B cell (primary cell): ENCODE measurements at regions of chr20 and their contacts with region 1.

Region 1: GRCh38 chr20:36605399-36606157 is at the start of gene RAB5IF:
- DNase-seq: peak; percentile 100
- ATAC-seq: peak; percentile 83
- H3K4me3 ChIP-seq: peak within 1 kb of the TSS; percentile 72 to 97 (median 90)
- H3K4me3 Mint-ChIP-seq: peak within 1 kb of the TSS; percentile 97
- H3K27ac ChIP-seq: peak within 1 kb of the TSS; percentile 91 to 97
- H3K27ac Mint-ChIP-seq: peak within 1 kb of the TSS; percentile 95
- H3K4me1 ChIP-seq: peaks cover 23 to 39% of the 10 kb centered on the region in 2 donors
- H3K4me1 Mint-ChIP-seq: peaks cover 46% of the 10 kb centered on the region
- H3K27me3 ChIP-seq: no peaks in the 10 kb centered on the region
- H3K27me3 Mint-ChIP-seq: no peaks in the 10 kb centered on the region
- CTCF ChIP-seq: peak; percentile 90
- total RNA-seq, gene RAB5IF: 40.1 and 41.4 TPM in 2 replicates

Region 2: DNA sequence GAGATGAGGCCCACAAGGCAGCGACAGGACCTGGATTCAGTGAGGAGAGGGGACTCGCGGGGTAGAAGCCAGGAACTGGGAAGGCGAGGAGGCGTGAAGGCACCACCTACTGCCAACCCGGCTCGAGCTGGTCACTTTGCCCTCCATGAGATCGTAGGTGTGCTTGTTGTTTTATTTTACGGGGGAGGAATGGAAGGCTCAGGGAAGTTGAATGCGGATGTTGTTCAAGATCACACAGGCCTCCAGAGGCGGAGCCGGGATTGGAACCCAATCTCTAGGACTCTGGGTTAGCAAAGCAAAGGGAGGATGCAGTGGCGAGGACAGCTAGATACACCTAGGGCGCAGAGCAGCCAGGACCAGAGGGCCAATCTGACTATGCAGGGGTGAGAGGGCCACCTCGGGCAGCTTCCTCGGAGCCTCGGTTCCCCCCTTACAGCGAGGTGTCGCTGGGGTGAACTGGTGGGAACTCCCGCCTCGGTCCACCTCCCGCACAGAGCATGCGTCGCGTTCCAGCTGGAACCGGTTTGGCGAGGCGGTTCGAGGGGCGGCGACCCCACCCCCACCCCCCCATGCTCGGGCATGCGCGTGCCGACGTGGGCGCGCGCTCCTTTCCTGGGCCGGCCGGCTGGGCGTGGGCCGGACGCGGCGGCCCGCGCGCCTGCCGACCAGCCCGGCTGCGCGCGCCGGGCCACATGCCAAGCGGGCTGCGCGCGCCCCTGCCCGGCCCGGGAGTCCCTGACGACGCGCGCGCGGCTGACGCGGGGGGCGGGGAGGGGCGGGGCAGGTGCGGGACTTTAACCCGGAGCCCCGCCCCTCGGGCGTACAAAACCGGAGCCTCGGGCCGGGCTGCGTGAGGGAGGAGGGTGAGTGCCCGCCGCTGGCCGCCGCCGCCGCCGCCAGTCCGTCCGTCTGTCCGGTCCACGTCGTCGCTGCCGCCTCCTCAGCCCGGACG is 144.7 kb before region 1 on chr20:
- CTCF ChIA-PET with region 1: interaction called, 6 read pairs
- POLR2A ChIA-PET with region 1: interaction called, 8 read pairs
- intact Hi-C with region 1: loop called (anchors 2 kb)
- DNase-seq: peak; percentile 97
- ATAC-seq: peak; percentile 80
- H3K4me3 ChIP-seq: peak overlapping the region; percentile 40 to 79 (median 47)
- H3K4me3 Mint-ChIP-seq: peak overlapping the region; percentile 81
- H3K27ac ChIP-seq: peak overlapping the region; percentile 96 to 98
- H3K27ac Mint-ChIP-seq: peak overlapping the region; percentile 91
- H3K4me1 ChIP-seq: peaks cover 42 to 49% of the 10 kb centered on the region in 2 donors
- H3K4me1 Mint-ChIP-seq: peaks cover 46% of the 10 kb centered on the region
- H3K27me3 ChIP-seq: no peaks in the 10 kb centered on the region
- H3K27me3 Mint-ChIP-seq: no peaks in the 10 kb centered on the region
- CTCF ChIP-seq: no peak

Region 3: DNA sequence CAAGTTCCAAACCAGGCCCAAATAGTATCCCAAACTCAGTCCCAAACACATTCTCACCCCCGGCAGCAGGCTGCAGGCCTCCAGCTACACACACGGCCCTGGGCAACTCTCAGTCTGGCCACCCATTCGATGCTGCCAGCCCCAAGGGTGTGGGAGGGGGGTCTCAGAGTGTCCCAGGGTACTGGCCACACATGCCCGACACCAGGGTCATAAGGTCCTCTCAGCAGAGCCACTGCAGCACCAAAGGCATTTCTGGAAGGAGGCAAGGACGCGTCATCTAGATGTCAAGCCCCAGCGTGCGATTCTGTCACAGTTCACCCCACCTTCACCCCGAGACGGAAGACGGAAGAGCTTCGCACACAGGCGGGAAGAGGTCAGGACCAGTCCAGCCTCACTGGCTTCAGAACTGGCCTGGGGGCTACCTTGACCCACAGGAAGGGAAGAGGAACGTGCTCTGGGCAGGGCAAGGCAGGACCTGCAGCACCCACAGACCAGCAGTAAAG is 54.7 kb before region 1 on chr20:
- CTCF ChIA-PET with region 1: interaction called, 6 read pairs
- POLR2A ChIA-PET with region 1: no interaction called
- intact Hi-C with region 1: loop called (anchors 1 kb)
- DNase-seq: no peak
- ATAC-seq: no peak
- H3K4me3 ChIP-seq: no peak overlapping the region
- H3K4me3 Mint-ChIP-seq: no peak overlapping the region
- H3K27ac ChIP-seq: no peak overlapping the region
- H3K27ac Mint-ChIP-seq: no peak overlapping the region
- H3K4me1 ChIP-seq: peaks cover 0 to under 1% of the 10 kb centered on the region in 2 donors
- H3K4me1 Mint-ChIP-seq: peaks cover 4% of the 10 kb centered on the region
- H3K27me3 ChIP-seq: no peaks in the 10 kb centered on the region
- H3K27me3 Mint-ChIP-seq: no peaks in the 10 kb centered on the region
- CTCF ChIP-seq: no peak

Region 4: GRCh38 chr20:36573103-36573794 is 32.3 kb before region 1 on chr20 and contains the start of gene TGIF2:
- CTCF ChIA-PET with region 1: interaction called, 63 read pairs
- POLR2A ChIA-PET with region 1: interaction called, 75 read pairs
- intact Hi-C with region 1: loop called (anchors 1 kb)
- DNase-seq: peak; percentile 94
- ATAC-seq: peak; percentile 80
- H3K4me3 ChIP-seq: peak within 1 kb of the TSS; percentile 22 to 95 (median 88)
- H3K4me3 Mint-ChIP-seq: peak within 1 kb of the TSS; percentile 92
- H3K27ac ChIP-seq: peak within 1 kb of the TSS; percentile 97 to 100
- H3K27ac Mint-ChIP-seq: peak within 1 kb of the TSS; percentile 98
- H3K4me1 ChIP-seq: peaks cover 23 to 34% of the 10 kb centered on the region in 2 donors
- H3K4me1 Mint-ChIP-seq: peaks cover 34% of the 10 kb centered on the region
- H3K27me3 ChIP-seq: no peaks in the 10 kb centered on the region
- H3K27me3 Mint-ChIP-seq: no peaks in the 10 kb centered on the region
- CTCF ChIP-seq: no peak
- total RNA-seq, gene TGIF2: 45.6 and 46.1 TPM in 2 replicates

Region 5: DNA sequence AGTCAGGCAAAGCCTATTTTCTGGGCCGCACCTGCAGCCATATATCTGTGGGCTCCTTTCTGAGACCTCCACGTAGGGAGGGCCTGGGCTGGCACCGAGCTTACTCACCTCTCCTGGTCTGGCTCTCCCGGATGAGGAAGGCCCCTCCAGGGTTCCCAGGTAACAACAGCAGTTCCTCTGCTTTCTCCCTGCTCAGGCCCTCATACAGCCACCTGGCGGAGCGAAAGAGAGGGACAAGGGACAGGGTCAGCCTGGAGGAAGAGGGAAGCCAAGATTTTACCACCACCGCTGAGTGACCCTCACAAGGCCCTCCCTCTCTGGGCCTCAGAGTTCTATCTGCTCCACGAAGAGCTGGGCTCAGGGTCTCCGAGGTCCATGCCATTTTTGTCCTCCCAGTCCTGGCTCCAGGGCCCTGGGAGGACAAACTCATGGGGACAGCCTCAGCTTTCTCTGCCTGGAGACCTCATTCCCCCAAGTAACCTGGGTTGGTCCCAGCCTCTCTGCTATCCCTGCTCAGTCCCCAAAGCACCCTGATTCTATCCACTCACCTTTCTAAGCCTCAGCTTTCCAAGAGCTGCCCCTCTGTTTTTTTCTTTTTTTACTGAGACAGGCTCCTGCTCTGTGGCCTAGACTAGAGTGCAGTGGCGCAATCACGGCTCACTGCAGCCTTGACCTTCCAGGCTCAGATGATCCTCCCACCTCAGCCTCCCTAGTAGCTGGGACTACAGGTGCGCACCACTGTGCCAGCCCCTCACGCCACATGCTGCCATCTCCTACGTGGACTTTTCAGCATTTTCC is 27.1 kb after region 1 on chr20:
- CTCF ChIA-PET with region 1: no interaction called
- POLR2A ChIA-PET with region 1: no interaction called
- intact Hi-C with region 1: no loop called
- DNase-seq: no peak
- ATAC-seq: no peak
- H3K4me3 ChIP-seq: no peak overlapping the region
- H3K4me3 Mint-ChIP-seq: no peak overlapping the region
- H3K27ac ChIP-seq: no peak overlapping the region
- H3K27ac Mint-ChIP-seq: no peak overlapping the region
- H3K4me1 ChIP-seq: peaks cover 9 to 11% of the 10 kb centered on the region in 2 donors
- H3K4me1 Mint-ChIP-seq: peaks cover 13% of the 10 kb centered on the region
- H3K27me3 ChIP-seq: no peaks in the 10 kb centered on the region
- H3K27me3 Mint-ChIP-seq: no peaks in the 10 kb centered on the region
- CTCF ChIP-seq: no peak

Region 6: DNA sequence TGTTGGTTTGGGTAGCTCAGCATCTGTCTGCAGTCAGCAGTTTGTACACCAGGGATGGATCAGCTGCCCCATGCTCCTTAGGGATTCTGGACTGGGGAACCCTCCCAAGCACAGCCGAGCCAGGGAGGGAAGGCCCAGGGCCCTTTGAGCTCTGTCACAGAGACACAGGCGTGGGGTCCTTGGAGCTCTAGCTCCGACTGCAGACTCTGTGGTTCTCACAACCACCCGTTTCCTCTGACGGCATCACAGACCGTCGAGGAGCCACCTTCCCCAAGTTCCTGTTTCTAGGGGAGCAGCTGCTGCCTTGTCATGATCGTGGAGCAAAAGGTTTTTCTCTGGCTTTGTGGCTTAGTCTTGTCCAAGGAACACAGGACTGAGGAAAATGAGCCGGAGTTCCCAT is 40.4 kb after region 1 on chr20 and contains the start of gene SLA2:
- CTCF ChIA-PET with region 1: interaction called, 4 read pairs
- POLR2A ChIA-PET with region 1: interaction called, 11 read pairs
- intact Hi-C with region 1: no loop called
- DNase-seq: peak; percentile 60
- ATAC-seq: peak; percentile 86
- H3K4me3 ChIP-seq: no peak within 1 kb of the TSS
- H3K4me3 Mint-ChIP-seq: peak within 1 kb of the TSS; percentile 39
- H3K27ac ChIP-seq: no peak within 1 kb of the TSS
- H3K27ac Mint-ChIP-seq: peak within 1 kb of the TSS; percentile 80
- H3K4me1 ChIP-seq: peaks cover 9 to 13% of the 10 kb centered on the region in 2 donors
- H3K4me1 Mint-ChIP-seq: peaks cover 27% of the 10 kb centered on the region
- H3K27me3 ChIP-seq: no peaks in the 10 kb centered on the region
- H3K27me3 Mint-ChIP-seq: no peaks in the 10 kb centered on the region
- CTCF ChIP-seq: no peak
- total RNA-seq, gene SLA2: 0.58 and 0.76 TPM in 2 replicates

Region 7: GRCh38 chr20:36773597-36774390 is 168.2 kb after region 1 on chr20 and contains the start of gene DSN1:
- CTCF ChIA-PET with region 1: interaction called, 9 read pairs
- POLR2A ChIA-PET with region 1: interaction called, 5 read pairs
- intact Hi-C with region 1: loop called (anchors 1 kb)
- DNase-seq: peak; percentile 98
- ATAC-seq: peak; percentile 86
- H3K4me3 ChIP-seq: peak within 1 kb of the TSS; percentile 84 to 96 (median 92)
- H3K4me3 Mint-ChIP-seq: peak within 1 kb of the TSS; percentile 89
- H3K27ac ChIP-seq: peak within 1 kb of the TSS; percentile 77 to 92
- H3K27ac Mint-ChIP-seq: peak within 1 kb of the TSS; percentile 99
- H3K4me1 ChIP-seq: peaks cover 8 to 16% of the 10 kb centered on the region in 2 donors
- H3K4me1 Mint-ChIP-seq: peaks cover 33% of the 10 kb centered on the region
- H3K27me3 ChIP-seq: no peaks in the 10 kb centered on the region
- H3K27me3 Mint-ChIP-seq: no peaks in the 10 kb centered on the region
- CTCF ChIP-seq: no peak
- total RNA-seq, gene DSN1: 17.1 and 18.4 TPM in 2 replicates

Region 8: DNA sequence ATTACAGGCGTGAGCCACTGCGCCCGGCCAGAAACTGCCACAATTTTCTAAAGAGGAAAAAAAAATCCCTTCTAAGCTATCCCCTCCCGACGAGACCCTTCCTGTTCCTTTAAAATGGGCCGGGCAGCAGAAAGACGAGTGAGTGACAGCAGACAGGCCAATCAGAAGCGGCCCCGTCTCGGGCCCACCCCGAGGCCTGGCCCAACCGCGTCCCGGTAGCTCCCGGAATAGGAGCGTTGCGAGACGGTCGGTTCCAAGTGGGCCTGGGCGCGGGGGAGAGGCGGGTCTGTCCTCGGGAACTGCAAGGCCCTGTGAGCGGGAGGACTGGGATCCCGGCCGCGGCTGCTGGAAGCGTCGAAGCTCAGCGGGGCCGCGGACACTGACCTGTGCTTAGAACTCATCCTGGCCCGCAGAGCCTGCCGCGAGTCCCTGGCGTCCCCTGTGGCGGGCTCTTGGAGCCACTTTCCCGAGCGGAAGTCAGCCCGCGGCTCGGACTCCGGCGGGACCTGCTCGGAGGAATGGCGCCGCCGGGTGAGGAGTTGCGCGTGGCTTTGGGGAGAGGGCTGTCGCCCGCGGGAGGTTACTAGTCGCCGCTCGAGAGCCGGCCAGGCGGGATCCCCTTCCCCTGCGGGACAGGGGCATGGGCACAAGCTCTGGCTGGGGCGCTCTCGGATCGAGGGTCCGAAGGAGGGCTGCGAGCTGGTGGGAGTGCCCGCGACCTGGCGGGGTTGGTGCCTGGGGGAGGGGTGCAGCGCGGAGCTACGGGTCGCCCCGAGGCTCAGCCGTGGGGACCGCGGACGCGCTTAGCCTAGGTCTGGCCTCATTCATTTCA is 573.5 kb after region 1 on chr20 and contains the starts of genes MROH8 and RPN2:
- CTCF ChIA-PET with region 1: no interaction called
- POLR2A ChIA-PET with region 1: interaction called, 3 read pairs
- intact Hi-C with region 1: loop called (anchors 10 kb)
- DNase-seq: peak; percentile 95
- ATAC-seq: peak; percentile 91
- H3K4me3 ChIP-seq: peak within 1 kb of the TSS; percentile 85 to 100 (median 89)
- H3K4me3 Mint-ChIP-seq: peak within 1 kb of the TSS; percentile 98
- H3K27ac ChIP-seq: peak within 1 kb of the TSS; percentile 80 to 95
- H3K27ac Mint-ChIP-seq: peak within 1 kb of the TSS; percentile 99
- H3K4me1 ChIP-seq: peaks cover 24 to 34% of the 10 kb centered on the region in 2 donors
- H3K4me1 Mint-ChIP-seq: peaks cover 40% of the 10 kb centered on the region
- H3K27me3 ChIP-seq: no peaks in the 10 kb centered on the region
- H3K27me3 Mint-ChIP-seq: no peaks in the 10 kb centered on the region
- CTCF ChIP-seq: no peak
- total RNA-seq, gene MROH8: 4.6 and 6.3 TPM in 2 replicates
- total RNA-seq, gene RPN2: 80.2 and 86.9 TPM in 2 replicates